Dorsolateral prefrontal cortex (tissue), 120 donors: ENCODE measurements at regions of chr11 and their contacts with region 1.

Region 1: GRCh38 chr11:63945477-63946163 is 6.8 kb downstream of the NAA40 start:
- DNase-seq: peak; percentile 38 to 79 (median 72)
- H3K4me3 ChIP-seq: peak overlapping the region in 32 of 59 donors; percentile 1 to 44 (median 20)
- H3K27ac ChIP-seq: peak overlapping the region in 52 of 59 donors; percentile 5 to 84 (median 60)
- H3K27me3 ChIP-seq: no peaks in the 10 kb centered on the region
- CTCF ChIP-seq: peak; percentile 71 to 96 (median 88)

Region 2: GRCh38 chr11:63768237-63769043 is 177.2 kb before region 1 on chr11 and contains the start of gene ZFTA:
- intact Hi-C with region 1: loop called in 1 of 2 experiments (anchors 5 kb)
- DNase-seq: peak in 5 of 10 donors; percentile 52 to 76 (median 59)
- H3K4me3 ChIP-seq: peak within 1 kb of the TSS; percentile 62 to 87 (median 78)
- H3K27ac ChIP-seq: peak within 1 kb of the TSS in 55 of 59 donors; percentile 29 to 89 (median 80)
- H3K27me3 ChIP-seq: no peaks in the 10 kb centered on the region
- CTCF ChIP-seq: peak in 41 of 56 donors; percentile 0 to 92 (median 64)
- total RNA-seq, gene ZFTA: 8.7 to 41.2 (median 25.3) TPM

Region 3: DNA sequence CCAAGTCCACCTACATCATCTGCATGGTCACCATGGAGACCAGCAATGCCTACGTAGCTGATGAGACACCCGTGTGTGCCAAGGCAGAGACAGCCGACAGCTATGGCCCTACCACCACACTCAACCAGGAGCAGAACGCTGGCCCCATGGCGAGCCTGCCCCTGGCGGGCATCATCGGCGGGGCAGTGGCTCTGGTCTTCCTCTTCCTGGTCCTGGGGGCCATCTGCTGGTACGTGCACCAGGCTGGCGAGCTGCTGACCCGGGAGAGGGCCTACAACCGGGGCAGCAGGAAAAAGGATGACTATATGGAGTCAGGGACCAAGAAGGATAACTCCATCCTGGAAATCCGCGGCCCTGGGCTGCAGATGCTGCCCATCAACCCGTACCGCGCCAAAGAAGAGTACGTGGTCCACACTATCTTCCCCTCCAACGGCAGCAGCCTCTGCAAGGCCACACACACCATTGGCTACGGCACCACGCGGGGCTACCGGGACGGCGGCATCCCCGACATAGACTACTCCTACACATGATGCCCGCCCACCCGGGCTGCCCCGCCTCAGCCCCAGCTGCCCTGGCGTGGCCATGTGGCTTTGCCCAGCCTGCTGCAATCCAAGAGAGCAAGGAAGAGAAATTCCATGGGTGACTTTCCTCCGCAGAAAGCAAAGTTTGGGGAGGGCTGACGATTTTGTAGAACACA is 172.3 kb after region 1 on chr11:
- intact Hi-C with region 1: no loop called
- DNase-seq: peak in 2 of 10 donors; percentile 56 to 61
- H3K4me3 ChIP-seq: no peak overlapping the region
- H3K27ac ChIP-seq: peak overlapping the region in 32 of 59 donors; percentile 2 to 67 (median 33)
- H3K27me3 ChIP-seq: no peaks in the 10 kb centered on the region
- CTCF ChIP-seq: peak in 49 of 56 donors; percentile 13 to 67 (median 37)

Region 4: GRCh38 chr11:64331557-64332371 is 386.1 kb after region 1 on chr11:
- intact Hi-C with region 1: no loop called
- DNase-seq: peak in 2 of 10 donors; percentile 35 to 53
- H3K4me3 ChIP-seq: no peak overlapping the region
- H3K27ac ChIP-seq: no peak overlapping the region
- H3K27me3 ChIP-seq: no peaks in the 10 kb centered on the region
- CTCF ChIP-seq: peak in 28 of 56 donors; percentile 7 to 36 (median 16)